Cardiac septum (tissue), 1 donor: ENCODE measurements at regions of chr14 and their contacts with region 1.

Region 1: GRCh38 chr14:76863724-76864407 is 37.7 kb downstream of the LRRC74A start:
- DNase-seq: peak; percentile 86

Region 2: DNA sequence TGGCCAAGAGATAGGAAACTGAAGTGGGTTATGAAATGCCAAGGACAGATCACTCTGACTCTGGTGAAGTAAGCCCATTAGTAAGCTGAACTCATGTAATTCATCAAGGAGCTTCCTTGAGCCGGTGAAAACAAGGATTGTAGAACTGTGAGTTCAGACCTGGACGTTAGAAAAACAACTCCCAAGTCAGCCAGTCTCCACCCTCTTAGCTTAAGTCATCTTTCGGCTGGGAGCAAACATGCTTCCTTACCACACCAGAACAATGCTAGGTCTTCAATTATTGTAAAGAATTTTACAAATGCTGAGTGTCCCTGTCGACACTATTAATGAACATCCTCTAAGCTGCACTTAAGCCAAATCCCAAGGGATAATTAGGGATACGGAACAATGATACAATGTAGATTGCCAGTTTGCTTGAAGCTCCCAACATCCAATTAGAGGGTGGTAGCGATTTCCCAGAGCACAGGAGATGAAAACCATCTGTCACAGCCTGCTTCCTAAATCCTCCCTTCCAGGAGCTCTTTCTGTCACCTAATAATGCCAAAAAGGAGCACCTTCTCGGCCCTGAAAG is 148.3 kb before region 1 on chr14:
- intact Hi-C with region 1: loop called (anchors 5 kb)
- DNase-seq: no peak

Region 3: GRCh38 chr14:76844223-76844622 is 19.6 kb before region 1 on chr14:
- intact Hi-C with region 1: loop called (anchors 1 kb)
- DNase-seq: peak; percentile 88